A673 (cell line): ENCODE measurements at regions of chr22 and their contacts with region 1.

Region 1: DNA sequence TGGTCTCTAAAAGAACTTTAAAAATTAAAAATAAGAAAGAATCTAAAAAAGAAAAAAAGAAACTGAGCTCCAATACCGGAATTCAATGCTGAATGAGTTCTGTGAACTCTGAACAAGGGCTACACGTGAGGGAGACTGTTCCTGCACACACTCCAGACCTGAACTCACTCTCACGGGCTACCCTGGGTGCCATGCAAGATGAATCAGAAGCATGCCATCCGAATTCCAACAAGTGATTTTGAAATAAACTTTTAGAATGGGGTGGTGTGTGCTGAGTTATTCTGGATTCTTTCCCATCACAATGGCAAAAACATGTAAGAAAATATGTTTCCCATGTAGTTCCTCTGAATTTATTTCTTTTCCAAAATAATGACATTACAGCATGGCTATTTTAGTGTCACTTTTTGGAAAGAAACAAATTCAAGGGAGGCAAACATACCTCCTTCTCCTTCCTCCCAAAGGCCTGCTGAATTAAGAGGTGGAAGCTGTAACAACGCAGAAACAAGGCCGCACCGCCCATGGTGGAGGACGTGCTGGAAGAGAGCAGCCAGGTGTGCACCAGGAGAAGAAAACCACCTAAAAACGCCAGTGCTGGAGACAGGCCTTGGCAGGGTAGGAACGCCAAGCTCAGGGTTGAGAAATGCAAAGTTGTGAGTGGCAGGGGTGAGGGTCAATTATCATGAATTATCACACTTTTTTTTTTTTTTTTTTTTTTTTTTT is 63.2 kb upstream of the ARFGAP3 start:
- DNase-seq: no peak
- H3K4me3 ChIP-seq: no peak overlapping the region
- H3K27ac ChIP-seq: no peak overlapping the region
- H3K4me1 ChIP-seq: peaks cover 8% of the 10 kb centered on the region
- H3K27me3 ChIP-seq: no peaks in the 10 kb centered on the region
- CTCF ChIP-seq: no peak

Region 2: DNA sequence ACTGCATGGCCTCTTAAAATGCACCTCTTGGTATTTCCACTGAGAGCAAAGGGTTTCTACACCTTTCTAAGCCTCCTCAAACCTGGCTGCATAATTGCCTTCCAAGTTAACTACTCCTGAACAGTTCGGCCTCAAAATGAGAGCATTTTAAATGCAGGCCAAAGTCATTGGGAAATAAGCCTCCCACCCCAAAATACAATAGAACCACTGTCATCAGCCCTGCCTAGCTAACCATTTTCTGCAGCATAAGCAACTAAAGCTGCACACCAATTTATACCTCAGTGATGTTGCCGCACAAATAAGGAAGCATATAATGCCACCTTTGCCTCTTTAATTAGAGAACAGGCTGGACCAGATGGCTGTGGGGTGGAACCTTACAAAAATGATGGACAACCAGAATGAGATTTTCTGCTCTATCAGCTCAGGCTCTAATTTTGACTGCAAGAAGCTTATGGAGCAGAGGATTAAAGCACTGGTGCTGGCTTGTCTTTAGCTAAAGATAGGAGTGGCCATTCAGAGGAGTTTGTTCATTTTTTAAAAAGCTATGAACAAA is 1477.9 kb before region 1 on chr22:
- CTCF ChIA-PET with region 1: interaction called, 13 read pairs
- POLR2A ChIA-PET with region 1: no interaction called
- intact Hi-C with region 1: no loop called
- DNase-seq: no peak
- H3K4me3 ChIP-seq: no peak overlapping the region
- H3K27ac ChIP-seq: no peak overlapping the region
- H3K4me1 ChIP-seq: peaks cover 5% of the 10 kb centered on the region
- H3K27me3 ChIP-seq: no peaks in the 10 kb centered on the region
- CTCF ChIP-seq: no peak